Heart right ventricle (tissue), 16 donors: ENCODE measurements at regions of chr3 and their contacts with region 1.

Region 1: DNA sequence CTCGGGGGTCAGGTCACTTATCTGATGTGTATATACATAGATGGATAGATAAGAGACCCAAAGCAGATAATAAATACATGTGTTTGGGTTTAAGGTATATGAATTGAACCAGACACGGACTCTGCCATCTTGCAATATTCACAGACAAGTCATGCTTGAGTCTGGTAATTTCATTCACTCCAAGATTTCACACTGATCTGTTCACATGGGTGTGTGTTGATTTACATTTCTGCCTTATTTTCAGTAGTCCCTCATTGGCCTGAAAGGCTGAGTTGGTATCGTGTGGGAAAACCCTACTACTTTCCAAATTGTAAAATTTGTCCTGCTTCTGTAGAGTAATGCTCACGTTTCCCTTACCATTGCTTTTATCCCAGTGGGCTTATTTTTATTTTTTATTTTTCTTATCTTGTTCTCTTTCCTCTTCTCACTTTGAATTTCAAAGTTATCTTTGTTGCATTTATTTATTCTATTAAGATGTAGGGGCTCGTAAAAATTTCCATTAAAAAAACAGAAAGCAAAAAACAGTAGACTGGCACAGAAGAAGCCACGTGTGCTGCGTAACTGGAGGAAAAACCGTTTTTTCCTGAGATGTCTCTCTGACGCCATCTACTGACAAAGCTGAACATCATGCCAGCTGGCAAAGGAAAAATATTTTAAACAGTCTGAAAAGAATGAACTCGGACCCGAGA is 10.8 kb upstream of the MFSD1 start:
- DNase-seq: no peak
- ATAC-seq: peak in 7 of 8 donors; percentile 38 to 75 (median 61)
- H3K4me3 ChIP-seq: peak overlapping the region in 5 of 10 donors; percentile 1 to 22 (median 19)
- H3K27ac ChIP-seq: no peak overlapping the region
- H3K4me1 ChIP-seq: peaks cover 0 to 11% (median 0%) of the 10 kb centered on the region in 9 donors
- H3K27me3 ChIP-seq: no peaks in the 10 kb centered on the region
- CTCF ChIP-seq: peak; percentile 56 to 90 (median 82)

Region 2: GRCh38 chr3:158539414-158540014 is 251.5 kb before region 1 on chr3:
- intact Hi-C with region 1: loop called in 6 of 10 experiments (anchors 5 to 10 kb)
- DNase-seq: peak in 1 of 2 donors; percentile 21
- ATAC-seq: peak in 2 of 8 donors; percentile 37 to 54
- H3K4me3 ChIP-seq: no peak overlapping the region
- H3K27ac ChIP-seq: no peak overlapping the region
- H3K4me1 ChIP-seq: no peaks in the 10 kb centered on the region
- H3K27me3 ChIP-seq: no peaks in the 10 kb centered on the region
- CTCF ChIP-seq: peak; percentile 30 to 73 (median 58)

Region 3: GRCh38 chr3:158659454-158660237 is 131.4 kb before region 1 on chr3:
- intact Hi-C with region 1: loop called in 7 of 10 experiments (anchors 5 to 10 kb)
- DNase-seq: peak in 1 of 2 donors; percentile 58
- ATAC-seq: peak in 7 of 8 donors; percentile 74 to 93 (median 85)
- H3K4me3 ChIP-seq: no peak overlapping the region
- H3K27ac ChIP-seq: peak overlapping the region in 9 of 10 donors; percentile 18 to 74 (median 46)
- H3K4me1 ChIP-seq: peaks cover 0 to 19% (median 9%) of the 10 kb centered on the region in 9 donors
- H3K27me3 ChIP-seq: no peaks in the 10 kb centered on the region
- CTCF ChIP-seq: peak; percentile 61 to 79 (median 70)

Region 4: GRCh38 chr3:158672293-158673176 is 118.5 kb before region 1 on chr3 and contains the start of gene LXN:
- intact Hi-C with region 1: loop called in 6 of 10 experiments (anchors 5 to 10 kb)
- DNase-seq: peak; percentile 78 to 82
- ATAC-seq: peak; percentile 94 to 99 (median 98)
- H3K4me3 ChIP-seq: peak within 1 kb of the TSS; percentile 25 to 69 (median 56)
- H3K27ac ChIP-seq: peak within 1 kb of the TSS; percentile 57 to 89 (median 78)
- H3K4me1 ChIP-seq: peaks cover 0 to 34% (median 18%) of the 10 kb centered on the region in 9 donors
- H3K27me3 ChIP-seq: no peaks in the 10 kb centered on the region
- CTCF ChIP-seq: peak; percentile 43 to 80 (median 58)
- total RNA-seq, gene LXN: 2.5 to 10.0 (median 3.2) TPM

Region 5: GRCh38 chr3:158727206-158728060 is 63.6 kb before region 1 on chr3:
- intact Hi-C with region 1: loop called (anchors 1 to 5 kb)
- DNase-seq: peak in 1 of 2 donors; percentile 72
- ATAC-seq: peak in 4 of 8 donors; percentile 22 to 49 (median 32)
- H3K4me3 ChIP-seq: peak overlapping the region in 1 of 10 donors; percentile 21
- H3K27ac ChIP-seq: peak overlapping the region in 5 of 10 donors; percentile 7 to 81 (median 30)
- H3K4me1 ChIP-seq: peaks cover 6 to 57% (median 32%) of the 10 kb centered on the region in 9 donors
- H3K27me3 ChIP-seq: no peaks in the 10 kb centered on the region
- CTCF ChIP-seq: peak; percentile 54 to 85 (median 80)